HCT116 (cell line): ENCODE measurements at regions of chr12 and their contacts with region 1.

Region 1: DNA sequence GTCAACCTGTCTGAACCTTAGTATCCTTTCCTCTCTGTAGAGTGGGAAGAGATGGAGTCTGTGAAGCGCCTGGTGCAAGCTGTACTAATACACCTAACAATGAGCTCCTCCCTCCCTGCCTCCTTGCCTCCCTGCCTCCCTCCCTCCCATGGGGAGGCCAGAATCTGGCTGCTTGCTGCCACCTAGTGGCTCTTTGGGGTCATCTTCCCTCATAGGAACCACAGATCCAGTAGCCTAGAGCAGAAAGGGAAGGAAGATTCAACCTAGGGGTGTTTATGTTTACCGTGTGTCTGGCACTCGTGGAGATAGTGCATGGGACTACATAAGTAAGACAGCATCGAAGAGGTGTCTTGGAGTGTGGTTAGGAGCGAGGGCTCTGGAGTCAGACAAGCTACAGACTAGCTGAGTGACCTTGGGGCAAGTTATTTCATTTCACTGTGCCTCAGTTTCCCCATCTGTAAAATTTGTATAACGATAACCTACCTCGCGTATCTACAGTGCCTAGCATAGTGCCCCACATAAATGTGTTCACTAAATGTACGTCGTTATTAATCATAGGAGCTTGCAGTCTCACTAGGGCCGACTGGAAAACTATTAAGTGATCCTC is 35.5 kb upstream of the TSPAN9 start:
- DNase-seq: peak; percentile 69
- ATAC-seq: peak; percentile 95
- H3K4me3 ChIP-seq: no peak overlapping the region
- H3K27ac ChIP-seq: no peak overlapping the region
- H3K4me1 ChIP-seq: peaks cover 0 to 5% of the 10 kb centered on the region in 2 experiments; a peak in 2 of 4 replicates
- H3K27me3 ChIP-seq: no peaks in the 10 kb centered on the region
- CTCF ChIP-seq: peak; percentile 57 to 82 (median 68); a peak in 5 of 6 replicates
- POLR2A ChIP-seq: no peak
- RAD21 ChIP-seq: peak; percentile 70

Region 2: GRCh38 chr12:2682296-2683251 is 359.1 kb before region 1 on chr12:
- CTCF ChIA-PET with region 1: interaction called, 4 read pairs
- POLR2A ChIA-PET with region 1: no interaction called
- RAD21 ChIA-PET with region 1: no interaction called
- intact Hi-C with region 1: loop called (anchors 1 kb)
- DNase-seq: peak; percentile 26
- ATAC-seq: peak; percentile 61
- H3K4me3 ChIP-seq: no peak overlapping the region
- H3K27ac ChIP-seq: no peak overlapping the region
- H3K4me1 ChIP-seq: no peaks in the 10 kb centered on the region
- H3K27me3 ChIP-seq: no peaks in the 10 kb centered on the region
- CTCF ChIP-seq: peak; percentile 51 to 66 (median 53); a peak in 5 of 6 replicates
- POLR2A ChIP-seq: no peak
- RAD21 ChIP-seq: peak; percentile 75

Region 3: DNA sequence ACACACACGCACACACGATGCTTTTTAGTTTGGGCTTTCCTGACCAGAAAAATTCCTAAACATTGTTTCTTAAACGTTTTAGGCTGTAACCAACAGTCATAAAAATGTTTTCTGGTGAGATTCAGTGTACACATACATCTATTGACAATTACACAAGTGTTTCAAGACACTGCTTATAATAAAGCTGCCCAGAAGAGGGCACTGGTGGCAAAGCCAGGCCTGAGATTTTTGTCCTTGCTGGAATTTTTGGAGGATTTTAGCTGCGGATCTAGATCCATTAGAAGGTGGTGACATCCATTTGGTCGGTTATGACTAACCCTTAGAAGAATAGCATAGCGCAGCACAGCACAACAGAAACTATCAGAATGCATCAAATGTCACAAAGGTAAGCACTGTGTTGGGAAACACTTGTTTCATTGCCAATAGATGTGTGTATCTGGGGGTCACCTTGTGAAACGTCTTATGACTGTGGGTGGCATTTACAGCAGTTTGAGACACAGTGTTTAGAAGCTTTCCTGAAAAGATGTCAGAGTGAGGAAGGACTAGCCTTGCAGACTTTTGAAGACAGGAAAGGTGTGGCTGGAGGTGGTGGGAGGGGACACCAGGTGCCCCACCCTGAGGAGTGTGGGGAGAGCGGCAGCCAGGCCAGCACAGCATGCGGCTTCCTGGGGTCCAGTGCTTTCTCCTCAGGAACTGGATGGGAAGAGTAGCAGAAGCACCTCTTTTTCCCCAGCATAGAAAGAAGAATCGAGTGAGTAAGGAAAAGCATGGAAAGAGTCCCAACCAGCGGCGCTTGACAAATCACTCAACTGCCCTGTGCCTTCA is 301.6 kb before region 1 on chr12:
- CTCF ChIA-PET with region 1: interaction called, 10 read pairs
- POLR2A ChIA-PET with region 1: no interaction called
- RAD21 ChIA-PET with region 1: no interaction called
- intact Hi-C with region 1: loop called (anchors 5 kb)
- DNase-seq: no peak
- ATAC-seq: peak; percentile 68
- H3K4me3 ChIP-seq: no peak overlapping the region
- H3K27ac ChIP-seq: no peak overlapping the region
- H3K4me1 ChIP-seq: no peaks in the 10 kb centered on the region
- H3K27me3 ChIP-seq: peaks cover 66% of the 10 kb centered on the region
- CTCF ChIP-seq: peak; percentile 57 to 72 (median 66); a peak in 5 of 6 replicates
- POLR2A ChIP-seq: no peak
- RAD21 ChIP-seq: peak; percentile 73

Region 4: DNA sequence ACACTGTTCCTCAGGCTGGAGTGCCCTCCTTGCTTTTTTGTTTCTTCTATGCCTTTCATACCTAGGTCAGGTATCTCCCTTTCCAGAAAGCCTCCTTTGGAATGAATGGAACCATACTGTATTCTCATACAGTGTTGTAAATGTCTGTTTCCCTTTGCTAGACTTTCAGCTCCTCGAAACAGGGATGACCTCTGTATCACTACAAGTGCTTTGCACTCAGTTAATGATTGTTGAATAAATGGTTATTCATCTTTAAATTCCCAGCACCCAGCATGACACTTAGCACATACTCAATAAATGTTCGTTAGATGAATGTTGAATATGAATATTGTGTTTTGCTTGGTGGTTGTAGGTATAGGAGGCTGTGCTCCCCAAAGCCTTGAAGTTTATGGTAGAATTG is 156.9 kb before region 1 on chr12:
- CTCF ChIA-PET with region 1: interaction called, 28 read pairs
- POLR2A ChIA-PET with region 1: no interaction called
- RAD21 ChIA-PET with region 1: interaction called, 6 to 7 read pairs
- intact Hi-C with region 1: loop called (anchors 2 kb)
- DNase-seq: no peak
- ATAC-seq: peak; percentile 34
- H3K4me3 ChIP-seq: no peak overlapping the region
- H3K27ac ChIP-seq: no peak overlapping the region
- H3K4me1 ChIP-seq: peaks cover 0 to under 1% of the 10 kb centered on the region in 2 experiments; a peak in 2 of 4 replicates
- H3K27me3 ChIP-seq: no peaks in the 10 kb centered on the region
- CTCF ChIP-seq: no peak
- POLR2A ChIP-seq: no peak
- RAD21 ChIP-seq: no peak

Region 5: DNA sequence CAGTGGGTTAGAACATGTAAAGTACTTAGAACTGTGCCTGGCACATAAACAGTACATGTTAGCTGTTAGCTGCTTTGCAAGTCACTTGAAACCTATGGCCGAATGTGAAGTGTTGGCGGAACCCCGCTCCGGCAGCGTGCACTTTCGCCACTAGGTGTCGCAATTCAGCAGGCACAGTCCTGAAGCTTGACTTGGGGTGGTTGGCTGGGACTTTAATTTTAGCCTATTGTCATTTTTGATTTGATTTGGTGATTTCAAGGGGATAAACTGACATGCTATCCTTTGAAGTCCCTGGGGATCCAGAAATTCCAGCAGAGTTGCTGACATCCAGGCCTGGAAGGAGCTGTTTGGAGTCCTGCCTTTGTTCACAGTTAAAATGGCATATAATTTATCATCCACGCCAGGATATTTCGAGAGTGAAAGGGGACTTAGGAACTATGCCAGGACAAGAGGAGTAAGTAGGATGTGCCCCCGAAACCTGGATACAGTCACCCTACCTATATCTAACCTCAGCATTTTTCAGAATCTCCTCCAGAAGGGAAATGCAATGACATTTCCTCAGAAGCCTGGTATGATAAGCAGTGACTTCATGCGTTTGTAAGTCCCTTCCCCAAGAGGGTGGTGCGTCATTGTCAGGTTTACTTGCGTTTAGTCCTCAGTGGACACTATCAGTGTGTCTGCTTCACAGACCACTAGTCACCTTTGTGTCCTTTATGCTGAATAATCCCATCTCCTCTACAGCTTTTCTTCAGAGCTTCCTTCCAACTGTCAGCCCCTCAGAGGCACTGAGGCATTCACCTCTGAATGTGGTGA is 32.0 kb after region 1 on chr12:
- CTCF ChIA-PET with region 1: interaction called, 10 read pairs
- POLR2A ChIA-PET with region 1: no interaction called
- RAD21 ChIA-PET with region 1: no interaction called
- intact Hi-C with region 1: no loop called
- DNase-seq: peak; percentile 72
- ATAC-seq: peak; percentile 61
- H3K4me3 ChIP-seq: no peak overlapping the region
- H3K27ac ChIP-seq: no peak overlapping the region
- H3K4me1 ChIP-seq: peaks cover 11 to 27% of the 10 kb centered on the region in 2 experiments; a peak in 3 of 4 replicates
- H3K27me3 ChIP-seq: no peaks in the 10 kb centered on the region; the same call in 1 of the 2 replicates
- CTCF ChIP-seq: peak; percentile 74 to 99 (median 99); a peak in 5 of 6 replicates
- POLR2A ChIP-seq: no peak
- RAD21 ChIP-seq: peak; percentile 83

Region 6: GRCh38 chr12:3275171-3276041 is 233.7 kb after region 1 on chr12:
- CTCF ChIA-PET with region 1: interaction called, 10 read pairs
- POLR2A ChIA-PET with region 1: no interaction called
- RAD21 ChIA-PET with region 1: no interaction called
- intact Hi-C with region 1: no loop called
- DNase-seq: peak; percentile 24
- ATAC-seq: peak; percentile 82
- H3K4me3 ChIP-seq: no peak overlapping the region
- H3K27ac ChIP-seq: no peak overlapping the region
- H3K4me1 ChIP-seq: peaks cover 7 to 28% of the 10 kb centered on the region in 2 experiments
- H3K27me3 ChIP-seq: no peaks in the 10 kb centered on the region
- CTCF ChIP-seq: peak; percentile 87 to 97 (median 96)
- POLR2A ChIP-seq: no peak
- RAD21 ChIP-seq: peak; percentile 92